Endothelial cell of umbilical vein (primary cell): ENCODE measurements at regions of chr12 and their contacts with region 1.

Region 1: DNA sequence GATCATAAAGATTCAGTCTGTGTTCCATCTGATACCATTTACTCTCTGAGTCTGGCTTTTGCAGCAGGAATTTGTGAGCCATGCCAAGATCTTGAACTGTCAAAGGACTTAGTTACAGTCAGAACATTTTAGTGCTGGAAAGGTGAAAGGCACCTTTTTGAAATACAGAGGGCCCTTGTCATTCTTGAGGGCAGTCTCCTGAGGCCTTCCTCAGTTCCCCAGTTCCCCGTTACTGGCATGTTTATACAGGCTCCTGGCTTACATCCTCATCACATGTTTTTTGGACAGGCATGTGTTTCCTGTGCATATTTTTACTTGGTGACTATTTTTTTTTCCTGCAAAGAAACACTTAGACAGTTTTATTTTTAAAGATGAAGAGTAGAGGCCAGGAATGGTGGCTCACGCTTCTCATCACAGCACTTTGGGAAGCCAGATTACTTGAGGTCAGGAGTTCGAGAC is 21.0 kb downstream of the CFAP54 start:
- DNase-seq: peak; percentile 96
- H3K4me3 ChIP-seq: no peak overlapping the region
- H3K27ac ChIP-seq: peak overlapping the region; percentile 84
- H3K4me1 ChIP-seq: peaks cover 13% of the 10 kb centered on the region
- H3K27me3 ChIP-seq: no peaks in the 10 kb centered on the region
- CTCF ChIP-seq: no peak
- POLR2A ChIP-seq: peak; percentile 47

Region 2: DNA sequence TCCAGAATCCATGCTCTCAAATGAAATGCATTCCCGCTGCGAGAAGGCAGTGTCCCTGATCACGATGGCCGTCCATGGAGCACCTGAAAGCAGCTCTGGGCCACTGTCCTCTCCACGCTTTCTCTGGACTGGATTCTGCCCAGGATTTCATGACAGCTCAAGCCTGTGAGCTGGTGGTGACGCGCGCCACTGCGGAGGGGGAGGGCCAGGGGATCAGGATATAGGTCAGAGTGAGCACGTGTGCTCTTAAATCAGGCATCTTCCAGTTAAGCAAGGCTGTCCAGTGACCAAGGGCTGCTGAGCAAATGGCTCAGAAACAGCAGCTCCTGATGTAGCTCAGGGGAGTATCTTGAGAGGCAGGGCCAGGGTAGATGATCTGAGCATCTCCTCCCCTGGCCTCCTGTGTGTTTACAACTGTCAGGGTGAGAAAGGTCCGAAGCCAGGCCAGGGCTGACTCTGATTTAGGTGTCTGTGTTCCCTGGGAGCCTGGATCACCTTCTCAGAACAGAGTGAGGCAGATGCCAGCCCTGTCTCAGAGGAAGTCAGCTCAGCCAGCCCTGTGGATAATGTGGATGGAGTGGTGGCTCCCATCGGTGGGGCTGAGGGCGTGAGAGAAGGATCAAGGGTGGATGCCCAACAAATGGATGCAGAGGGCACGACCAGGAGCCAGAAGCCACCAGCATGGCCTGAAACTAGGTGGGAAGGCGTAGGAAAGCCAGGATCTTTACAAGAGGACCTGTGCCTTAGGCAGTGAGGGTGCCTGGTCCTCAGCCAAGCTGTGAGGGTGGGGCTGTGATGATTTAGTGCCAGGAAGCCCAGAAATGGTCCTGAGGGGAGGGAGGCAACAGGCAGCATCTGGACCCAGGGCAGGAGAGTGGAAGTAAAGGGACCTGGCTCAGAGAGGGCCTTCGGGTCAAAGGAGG is 260.9 kb before region 1 on chr12:
- CTCF ChIA-PET with region 1: no interaction called
- POLR2A ChIA-PET with region 1: interaction called, 10 read pairs
- dilution Hi-C with region 1: no loop called
- intact Hi-C with region 1: no loop called
- DNase-seq: no peak
- H3K4me3 ChIP-seq: no peak overlapping the region
- H3K27ac ChIP-seq: peak overlapping the region; percentile 46
- H3K4me1 ChIP-seq: peaks cover 40% of the 10 kb centered on the region
- H3K27me3 ChIP-seq: no peaks in the 10 kb centered on the region
- CTCF ChIP-seq: no peak
- POLR2A ChIP-seq: no peak

Region 3: GRCh38 chr12:96427269-96427729 is 83.0 kb before region 1 on chr12:
- CTCF ChIA-PET with region 1: no interaction called
- POLR2A ChIA-PET with region 1: no interaction called
- dilution Hi-C with region 1: no loop called
- intact Hi-C with region 1: loop called (anchors 1 kb)
- DNase-seq: peak; percentile 99
- H3K4me3 ChIP-seq: peak overlapping the region in 2 of 3 experiments; percentile 3 to 47
- H3K27ac ChIP-seq: peak overlapping the region; percentile 99
- H3K4me1 ChIP-seq: peaks cover 56% of the 10 kb centered on the region
- H3K27me3 ChIP-seq: no peaks in the 10 kb centered on the region
- CTCF ChIP-seq: no peak
- POLR2A ChIP-seq: no peak

Region 4: DNA sequence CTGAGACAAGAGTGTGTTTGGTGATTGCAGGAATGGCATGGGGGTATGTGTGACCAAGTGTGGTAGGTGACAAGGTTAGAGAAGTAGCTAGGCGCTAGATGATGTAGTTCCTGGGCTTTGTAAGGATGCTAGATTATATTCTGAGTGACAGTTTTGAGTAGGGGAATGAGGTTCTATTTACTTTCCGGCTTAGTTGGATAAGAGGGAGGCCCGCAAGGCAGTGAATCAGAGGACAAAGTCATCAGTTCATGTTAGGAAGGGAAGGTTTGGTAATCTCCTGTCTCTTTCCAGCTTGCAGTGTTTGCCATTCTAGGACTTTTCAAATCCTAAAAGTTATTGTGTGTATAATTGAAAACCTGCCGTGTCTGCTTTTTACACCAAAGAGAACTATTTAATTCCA is 24.0 kb after region 1 on chr12:
- CTCF ChIA-PET with region 1: no interaction called
- POLR2A ChIA-PET with region 1: no interaction called
- dilution Hi-C with region 1: no loop called
- intact Hi-C with region 1: no loop called
- DNase-seq: peak; percentile 22
- H3K4me3 ChIP-seq: no peak overlapping the region
- H3K27ac ChIP-seq: no peak overlapping the region
- H3K4me1 ChIP-seq: peaks cover 5% of the 10 kb centered on the region
- H3K27me3 ChIP-seq: no peaks in the 10 kb centered on the region
- CTCF ChIP-seq: no peak
- POLR2A ChIP-seq: no peak